PC-3 (cell line): ENCODE measurements at regions of chr1 and their contacts with region 1.

Region 1: DNA sequence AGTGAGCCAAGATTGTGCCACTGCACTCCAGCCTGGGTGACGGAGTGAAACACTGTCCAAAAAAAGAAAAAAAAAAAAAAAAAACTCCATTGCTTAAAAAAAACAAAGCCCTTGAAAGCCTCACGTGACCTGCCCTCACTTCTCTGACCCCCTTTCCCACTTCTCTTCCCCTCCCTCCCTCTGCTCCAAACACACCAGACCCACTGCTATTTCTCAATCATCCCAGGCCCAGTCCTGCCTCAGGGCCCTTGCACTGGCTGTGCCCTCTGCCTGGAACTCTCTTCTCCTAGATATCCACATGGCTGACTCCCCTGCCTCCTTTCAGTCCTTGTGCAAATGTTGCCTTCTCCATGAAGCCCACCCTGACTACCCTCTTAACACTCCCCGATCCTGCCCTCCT is 45.4 kb upstream of the TARDBP start:
- DNase-seq: no peak
- ATAC-seq: no peak
- H3K4me3 ChIP-seq: no peak overlapping the region
- H3K27ac ChIP-seq: no peak overlapping the region
- H3K4me1 ChIP-seq: 0 out of 2 replicates have a peak, but pooled peaks cover 4% of the 10 kb centered on the region
- H3K27me3 ChIP-seq: no peaks in the 10 kb centered on the region
- CTCF ChIP-seq: no peak

Region 2: DNA sequence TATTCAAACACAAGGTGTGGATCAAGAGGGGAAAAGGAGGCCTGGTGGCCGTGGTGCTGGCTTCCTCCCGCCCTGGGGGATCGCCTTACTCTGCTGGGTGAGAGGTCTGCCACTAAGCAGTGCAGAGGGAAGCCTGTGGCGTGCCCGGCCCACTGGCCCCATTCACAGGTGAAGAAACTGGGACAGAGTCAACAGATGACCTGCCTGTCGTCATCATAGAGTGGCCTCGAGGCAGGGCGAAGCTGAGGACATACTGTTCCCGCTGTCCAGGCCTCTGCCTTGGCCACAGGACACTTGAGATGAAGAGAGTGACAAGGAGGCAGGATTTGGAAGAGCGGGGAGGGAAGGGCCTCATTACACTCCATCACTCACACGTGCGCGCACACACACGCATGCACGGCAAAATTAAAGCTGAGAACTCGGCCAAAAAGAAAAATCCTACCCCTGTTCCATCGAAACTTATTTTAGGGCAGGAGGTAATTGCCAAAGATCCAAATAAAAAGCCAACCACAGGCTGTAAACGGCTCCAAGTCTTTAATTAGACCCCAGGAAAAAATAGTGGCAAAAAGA is 221.1 kb before region 1 on chr1:
- CTCF ChIA-PET with region 1: no interaction called
- POLR2A ChIA-PET with region 1: no interaction called
- intact Hi-C with region 1: no loop called
- DNase-seq: no peak
- ATAC-seq: no peak
- H3K4me3 ChIP-seq: no peak overlapping the region
- H3K27ac ChIP-seq: no peak overlapping the region
- H3K4me1 ChIP-seq: no peaks in the 10 kb centered on the region
- H3K27me3 ChIP-seq: no peaks in the 10 kb centered on the region
- CTCF ChIP-seq: no peak

Region 3: GRCh38 chr1:10980094-10980577 is 13.0 kb after region 1 on chr1:
- CTCF ChIA-PET with region 1: no interaction called
- POLR2A ChIA-PET with region 1: no interaction called
- intact Hi-C with region 1: no loop called
- DNase-seq: peak; percentile 76
- ATAC-seq: peak; percentile 94
- H3K4me3 ChIP-seq: peak overlapping the region; percentile 56
- H3K27ac ChIP-seq: no peak overlapping the region
- H3K4me1 ChIP-seq: peaks cover 14% of the 10 kb centered on the region; the same call in 1 of the 2 replicates
- H3K27me3 ChIP-seq: no peaks in the 10 kb centered on the region
- CTCF ChIP-seq: peak; percentile 65

Region 4: DNA sequence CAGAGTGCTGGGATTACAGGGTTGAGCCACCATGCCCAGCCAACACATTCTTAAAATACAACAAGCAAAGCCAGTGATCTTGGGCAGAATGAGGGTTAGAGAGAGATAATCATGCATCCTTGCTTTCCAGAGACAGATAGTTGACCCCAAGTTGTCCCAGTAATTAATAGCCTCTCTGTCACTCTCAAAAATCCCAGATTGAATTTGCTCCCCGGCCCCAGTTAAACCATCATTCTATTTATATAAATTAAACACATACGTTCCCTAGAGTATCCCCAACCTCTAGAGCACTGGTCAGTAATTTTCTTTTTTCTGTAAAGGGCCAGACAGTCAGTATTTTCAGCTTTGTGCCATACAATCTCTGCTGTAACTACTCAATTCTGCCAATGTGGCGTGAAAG is 29.0 kb after region 1 on chr1:
- CTCF ChIA-PET with region 1: no interaction called
- POLR2A ChIA-PET with region 1: no interaction called
- intact Hi-C with region 1: no loop called
- DNase-seq: no peak
- ATAC-seq: no peak
- H3K4me3 ChIP-seq: no peak overlapping the region
- H3K27ac ChIP-seq: no peak overlapping the region
- H3K4me1 ChIP-seq: no peaks in the 10 kb centered on the region
- H3K27me3 ChIP-seq: no peaks in the 10 kb centered on the region
- CTCF ChIP-seq: no peak

Region 5: GRCh38 chr1:11012250-11013171 is 45.4 kb after region 1 on chr1 and contains the start of gene TARDBP:
- CTCF ChIA-PET with region 1: no interaction called
- POLR2A ChIA-PET with region 1: interaction called, 12 read pairs
- intact Hi-C with region 1: no loop called
- DNase-seq: peak; percentile 83
- ATAC-seq: peak; percentile 89
- H3K4me3 ChIP-seq: peak within 1 kb of the TSS; percentile 95
- H3K27ac ChIP-seq: peak within 1 kb of the TSS; percentile 81
- H3K4me1 ChIP-seq: peaks cover 15% of the 10 kb centered on the region
- H3K27me3 ChIP-seq: no peaks in the 10 kb centered on the region
- CTCF ChIP-seq: no peak
- total RNA-seq, gene TARDBP: 78.5 and 102 TPM in 2 replicates